Activated CD4-positive, alpha-beta T cell treated with anti-CD3 and anti-CD28 coated beads for 36 hours (primary cell): ENCODE measurements at regions of chr13 and their contacts with region 1.

Region 1: GRCh38 chr13:24228852-24229458 is 68.4 kb downstream of the SPATA13 start:
- DNase-seq: peak; percentile 54
- ATAC-seq: peak; percentile 34
- H3K4me3 Mint-ChIP-seq: no peak overlapping the region
- H3K27ac Mint-ChIP-seq: no peak overlapping the region
- H3K4me1 Mint-ChIP-seq: peaks cover 31% of the 10 kb centered on the region
- H3K27me3 Mint-ChIP-seq: no peaks in the 10 kb centered on the region

Region 2: GRCh38 chr13:23348262-23349127 is 880.5 kb before region 1 on chr13:
- CTCF ChIA-PET with region 1: no interaction called
- POLR2A ChIA-PET with region 1: no interaction called
- intact Hi-C with region 1: no loop called
- DNase-seq: no peak
- ATAC-seq: no peak
- H3K4me3 Mint-ChIP-seq: no peak overlapping the region
- H3K27ac Mint-ChIP-seq: no peak overlapping the region
- H3K4me1 Mint-ChIP-seq: no peaks in the 10 kb centered on the region
- H3K27me3 Mint-ChIP-seq: no peaks in the 10 kb centered on the region

Region 3: GRCh38 chr13:23466144-23467002 is 762.6 kb before region 1 on chr13:
- CTCF ChIA-PET with region 1: no interaction called
- POLR2A ChIA-PET with region 1: no interaction called
- intact Hi-C with region 1: loop called (anchors 5 kb)
- DNase-seq: peak; percentile 78
- ATAC-seq: peak; percentile 92
- H3K4me3 Mint-ChIP-seq: peak overlapping the region; percentile 54
- H3K27ac Mint-ChIP-seq: no peak overlapping the region
- H3K4me1 Mint-ChIP-seq: peaks cover 12% of the 10 kb centered on the region
- H3K27me3 Mint-ChIP-seq: peaks cover 5% of the 10 kb centered on the region

Region 4: DNA sequence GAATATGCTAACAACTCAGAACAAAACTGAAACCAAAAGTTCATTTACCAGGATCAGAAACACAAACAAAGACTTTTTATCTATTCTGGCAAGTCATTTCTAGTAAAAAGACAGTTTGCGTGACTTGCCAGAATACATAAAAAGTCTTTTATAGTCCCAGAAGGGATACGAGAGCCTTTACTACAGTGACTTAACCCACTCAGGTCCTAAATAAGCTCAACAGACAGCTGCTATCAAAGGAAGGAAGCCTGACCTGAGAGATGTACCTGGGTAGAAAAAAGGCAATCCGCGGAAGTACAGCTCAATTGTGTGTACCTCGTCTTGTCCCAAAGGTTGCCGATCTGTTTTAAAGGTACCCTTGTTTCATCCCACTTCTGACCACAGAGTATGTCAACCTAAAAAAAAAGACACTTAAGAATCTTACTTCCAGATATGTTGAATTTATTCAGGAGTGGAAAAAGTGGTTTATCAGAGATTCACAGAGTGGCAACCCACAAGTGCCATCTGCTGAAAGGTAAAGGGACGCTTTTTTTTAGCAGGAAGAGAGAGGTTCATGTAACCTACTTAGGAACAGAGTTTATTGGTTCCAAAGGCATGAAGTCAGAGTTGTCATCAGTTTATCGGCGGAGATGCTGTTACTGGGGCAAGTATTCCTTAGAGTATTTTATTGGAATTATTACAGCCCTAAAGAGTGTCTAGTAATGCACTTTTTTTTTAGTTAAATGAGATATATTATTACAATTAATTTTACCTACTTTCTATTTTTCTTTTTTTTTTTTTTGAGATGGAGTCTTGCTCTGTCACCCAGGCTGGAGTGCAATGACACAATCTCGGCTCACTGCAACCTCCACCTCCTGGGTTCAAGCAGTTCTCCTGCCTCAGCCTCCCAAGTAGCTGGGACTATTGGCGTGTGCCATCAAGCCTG is 262.0 kb before region 1 on chr13:
- CTCF ChIA-PET with region 1: no interaction called
- POLR2A ChIA-PET with region 1: no interaction called
- intact Hi-C with region 1: loop called in 1 of 2 experiments (anchors 5 kb)
- DNase-seq: peak; percentile 6
- ATAC-seq: peak; percentile 79
- H3K4me3 Mint-ChIP-seq: peak overlapping the region; percentile 63
- H3K27ac Mint-ChIP-seq: peak overlapping the region; percentile 79
- H3K4me1 Mint-ChIP-seq: peaks cover 37% of the 10 kb centered on the region
- H3K27me3 Mint-ChIP-seq: no peaks in the 10 kb centered on the region

Region 5: DNA sequence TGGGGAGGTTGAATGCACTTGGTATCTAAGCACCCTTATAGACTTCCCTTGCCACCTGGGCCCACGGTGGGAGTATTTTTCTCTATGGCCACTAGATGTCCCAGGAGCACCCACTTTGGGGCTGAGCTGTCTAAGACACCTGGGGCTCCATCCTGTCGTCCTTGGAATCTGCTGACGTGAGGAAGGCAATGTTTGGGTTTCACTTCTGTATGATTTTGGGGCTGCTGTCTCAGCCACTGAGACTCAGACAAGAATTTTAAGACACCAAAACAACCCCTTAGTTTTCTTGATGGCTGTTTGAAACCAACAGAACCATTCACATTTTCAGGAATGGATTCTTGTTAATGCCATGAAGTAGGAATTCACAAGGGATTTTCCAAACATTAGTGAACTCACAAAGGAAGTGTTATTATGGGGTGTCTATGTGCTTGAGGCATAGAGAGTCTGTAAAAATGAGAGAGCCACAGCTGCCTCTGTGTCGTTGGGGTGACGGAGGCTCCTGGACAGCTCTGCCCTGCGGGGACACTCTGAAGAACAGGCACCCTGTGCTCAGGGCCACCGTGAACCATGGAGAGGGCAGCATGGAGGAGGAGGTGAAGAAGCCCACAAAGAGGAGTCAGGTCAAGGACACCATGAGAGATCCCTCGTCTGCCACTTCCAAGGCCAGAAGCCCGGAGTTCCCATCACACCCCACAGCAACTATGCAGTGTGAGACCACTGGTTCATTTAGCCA is 175.3 kb before region 1 on chr13:
- CTCF ChIA-PET with region 1: interaction called, 17 read pairs
- POLR2A ChIA-PET with region 1: no interaction called
- intact Hi-C with region 1: loop called in 1 of 2 experiments (anchors 2 kb)
- DNase-seq: peak; percentile 78
- ATAC-seq: peak; percentile 99
- H3K4me3 Mint-ChIP-seq: no peak overlapping the region
- H3K27ac Mint-ChIP-seq: no peak overlapping the region
- H3K4me1 Mint-ChIP-seq: no peaks in the 10 kb centered on the region
- H3K27me3 Mint-ChIP-seq: peaks cover 2% of the 10 kb centered on the region

Region 6: GRCh38 chr13:24270639-24271141 is 41.7 kb after region 1 on chr13:
- CTCF ChIA-PET with region 1: interaction called, 9 read pairs
- POLR2A ChIA-PET with region 1: no interaction called
- intact Hi-C with region 1: loop called in 1 of 2 experiments (anchors 1 kb)
- DNase-seq: peak; percentile 80
- ATAC-seq: peak; percentile 37
- H3K4me3 Mint-ChIP-seq: peak overlapping the region; percentile 87
- H3K27ac Mint-ChIP-seq: peak overlapping the region; percentile 97
- H3K4me1 Mint-ChIP-seq: peaks cover 85% of the 10 kb centered on the region
- H3K27me3 Mint-ChIP-seq: no peaks in the 10 kb centered on the region